Mucosa of descending colon (tissue), 3 donors: ENCODE measurements at regions of chr2 and their contacts with region 1.

Region 1: GRCh38 chr2:143524119-143524553 is 394.9 kb downstream of the ARHGAP15 start:
- DNase-seq: no peak
- ATAC-seq: no peak
- H3K4me3 ChIP-seq: no peak overlapping the region
- H3K4me1 ChIP-seq: no peaks in the 10 kb centered on the region
- CTCF ChIP-seq: no peak

Region 2: GRCh38 chr2:143433251-143433650 is 90.9 kb before region 1 on chr2:
- intact Hi-C with region 1: loop called in 1 of 2 experiments (anchors 10 kb)
- DNase-seq: no peak
- ATAC-seq: no peak
- H3K4me3 ChIP-seq: no peak overlapping the region
- H3K4me1 ChIP-seq: no peaks in the 10 kb centered on the region
- CTCF ChIP-seq: no peak

Region 3: GRCh38 chr2:143505542-143505941 is 18.6 kb before region 1 on chr2:
- intact Hi-C with region 1: no loop called
- DNase-seq: no peak
- ATAC-seq: no peak
- H3K4me3 ChIP-seq: no peak overlapping the region
- H3K4me1 ChIP-seq: no peaks in the 10 kb centered on the region
- CTCF ChIP-seq: no peak

Region 4: DNA sequence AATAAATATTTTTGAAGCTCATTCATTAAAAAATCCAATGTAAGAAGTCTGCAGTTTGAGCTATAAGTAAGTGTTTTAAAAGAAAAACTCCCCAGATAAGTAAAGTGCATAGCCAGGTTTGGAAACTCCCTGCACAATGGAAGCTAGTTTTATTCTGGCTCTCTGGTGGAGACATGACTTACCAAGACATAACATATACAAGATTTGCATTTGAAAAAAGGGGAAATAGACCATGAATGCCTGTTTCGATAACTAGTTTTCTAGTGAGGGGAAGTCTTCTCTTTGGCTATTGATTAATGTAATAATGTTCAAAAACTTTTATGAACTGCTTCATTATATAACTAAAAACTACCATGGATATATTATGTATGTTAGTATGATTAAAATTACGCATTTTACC is 40.3 kb after region 1 on chr2:
- intact Hi-C with region 1: no loop called
- DNase-seq: no peak
- ATAC-seq: no peak
- H3K4me3 ChIP-seq: no peak overlapping the region
- H3K4me1 ChIP-seq: no peaks in the 10 kb centered on the region
- CTCF ChIP-seq: no peak

Region 5: GRCh38 chr2:144865670-144866069 is 1341.5 kb after region 1 on chr2:
- intact Hi-C with region 1: no loop called
- DNase-seq: no peak
- ATAC-seq: no peak
- H3K4me3 ChIP-seq: no peak overlapping the region
- H3K4me1 ChIP-seq: no peaks in the 10 kb centered on the region
- CTCF ChIP-seq: no peak